Right ventricle myocardium inferior (tissue), 1 donor: ENCODE measurements at regions of chr3 and their contacts with region 1.

Region 1: GRCh38 chr3:172836390-172836997 is 86.0 kb downstream of the ECT2 start:
- DNase-seq: no peak
- ATAC-seq: peak; percentile 48

Region 2: DNA sequence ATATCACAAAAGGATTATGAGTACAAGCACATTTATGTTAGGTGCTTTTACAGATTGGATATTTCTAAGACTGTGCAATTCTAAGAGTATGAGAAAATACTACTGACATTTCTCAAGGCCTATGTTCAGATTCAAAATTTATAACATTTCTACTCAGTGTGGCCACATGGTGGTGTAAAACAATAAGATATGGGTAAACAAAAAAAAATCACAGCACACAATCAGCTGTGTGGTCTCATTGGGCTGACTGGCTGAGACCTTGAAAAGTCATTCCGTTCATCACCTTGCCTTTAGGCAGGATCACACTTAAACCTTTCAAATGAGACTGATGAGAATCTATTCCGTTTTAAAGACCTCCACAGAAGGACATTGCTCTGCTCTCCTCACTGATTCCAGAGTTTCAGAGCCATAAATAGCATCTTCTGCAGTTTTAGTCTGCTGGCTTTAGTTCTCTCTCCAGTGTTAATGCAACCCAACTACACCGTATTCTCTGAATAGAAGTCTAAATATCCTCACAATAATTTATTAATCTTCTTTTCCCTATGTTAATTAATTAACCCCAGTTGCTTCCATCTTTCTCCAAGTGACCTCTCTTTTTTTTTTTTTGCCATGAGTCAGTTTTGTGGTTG is 146.4 kb after region 1 on chr3:
- intact Hi-C with region 1: loop called (anchors 10 kb)
- DNase-seq: no peak
- ATAC-seq: peak; percentile 50

Region 3: DNA sequence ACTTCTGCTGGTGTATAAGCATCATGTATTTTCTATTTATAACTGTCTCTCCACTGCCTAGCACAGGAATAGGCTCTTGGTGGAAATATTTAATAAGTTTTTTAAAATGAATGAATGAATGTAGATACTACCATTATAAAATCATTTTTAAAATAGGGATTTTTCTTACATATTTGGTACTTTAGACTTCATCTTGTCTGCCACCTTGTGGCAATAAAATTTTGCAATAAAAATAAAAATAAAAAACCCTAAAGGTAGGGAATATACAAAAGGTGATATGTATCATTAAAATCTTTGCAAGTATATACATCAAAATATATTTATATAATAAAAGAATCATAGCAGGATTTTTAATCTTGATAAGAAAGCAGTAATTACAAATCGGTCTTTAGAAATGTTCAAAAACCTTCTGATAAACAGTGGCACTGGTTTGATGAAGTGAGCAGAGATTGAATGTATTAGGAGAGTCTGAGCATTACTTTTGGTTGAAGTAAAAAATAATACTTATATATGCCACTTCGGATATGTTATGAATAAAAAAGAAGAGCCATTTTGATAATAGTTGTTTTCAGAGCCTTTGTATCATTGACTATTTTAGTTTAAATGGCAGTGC is 209.4 kb after region 1 on chr3:
- intact Hi-C with region 1: loop called (anchors 5 kb)
- DNase-seq: no peak
- ATAC-seq: no peak